ENCODE measurements at regions of chr3 and their contacts with region 1.

Region 1: GRCh38 chr3:135014566-135014965 is 219.5 kb downstream of the EPHB1 start:
- DNase-seq: no peak
- ATAC-seq: no peak
- H3K4me3 ChIP-seq: no peak overlapping the region
- H3K27ac ChIP-seq: no peak overlapping the region
- H3K4me1 ChIP-seq: peaks cover 0 to 10% of the 10 kb centered on the region in 2 donors
- H3K27me3 ChIP-seq: no peaks in the 10 kb centered on the region
- CTCF ChIP-seq: no peak
- POLR2A ChIP-seq: no peak

Region 2: DNA sequence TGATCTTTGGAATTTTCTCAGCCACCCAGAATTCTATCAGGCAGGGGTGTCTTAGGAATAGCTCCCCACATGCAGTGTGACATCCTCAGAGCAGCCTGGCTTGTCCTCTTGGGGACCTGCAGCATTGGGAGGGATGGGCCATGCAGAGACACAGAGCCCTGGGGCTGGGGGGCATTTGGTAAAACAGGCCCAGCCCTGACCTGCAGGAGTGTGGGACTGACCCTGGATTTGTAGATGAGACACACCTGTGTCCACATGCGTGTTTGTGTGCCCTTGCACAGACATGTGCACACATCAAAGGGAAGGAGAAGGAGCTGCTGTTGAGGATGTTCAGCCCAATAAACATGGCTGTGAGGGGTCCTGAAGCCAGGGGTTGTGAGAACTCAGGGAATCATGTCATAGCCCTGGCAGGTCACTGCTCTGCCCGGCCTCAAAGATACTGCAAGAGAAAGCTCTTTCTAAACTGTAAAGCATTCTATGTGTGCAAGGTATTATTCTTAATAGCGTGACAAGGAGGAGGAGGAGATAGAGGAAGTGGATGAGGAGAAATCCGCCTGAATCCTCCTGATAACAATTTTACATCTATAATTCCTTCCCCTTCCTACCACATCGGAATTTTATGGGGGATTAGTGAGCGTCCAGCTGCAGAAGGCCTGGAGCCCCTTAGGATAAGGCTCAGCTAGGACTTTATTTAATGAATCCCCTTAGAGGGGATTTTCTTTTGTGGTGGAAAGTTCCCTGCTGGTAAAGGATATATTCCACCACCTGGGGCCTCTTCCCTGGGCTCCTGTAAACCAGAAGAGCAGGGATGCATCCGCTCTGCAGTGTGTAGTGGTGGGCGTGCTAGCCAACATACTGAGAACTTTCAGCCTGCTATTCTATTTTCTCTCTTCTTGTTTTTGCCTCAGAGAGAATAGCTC is 26.0 kb after region 1 on chr3:
- in situ Hi-C with region 1: no loop called
- intact Hi-C with region 1: loop called (anchors 2 kb)
- DNase-seq: no peak
- ATAC-seq: no peak
- H3K4me3 ChIP-seq: no peak overlapping the region
- H3K27ac ChIP-seq: no peak overlapping the region
- H3K4me1 ChIP-seq: no peaks in the 10 kb centered on the region
- H3K27me3 ChIP-seq: no peaks in the 10 kb centered on the region
- CTCF ChIP-seq: no peak
- POLR2A ChIP-seq: no peak